ENCODE measurements at regions of chr17 and their contacts with region 1.

Region 1: GRCh38 chr17:46193626-46194392 is 580 bp upstream of the KANSL1 start:
- DNase-seq: peak; percentile 95 to 96
- H3K4me3 ChIP-seq: peak overlapping the region; percentile 91 to 99
- H3K27ac ChIP-seq: peak overlapping the region; percentile 100
- H3K4me1 ChIP-seq: peaks cover 4 to 11% of the 10 kb centered on the region in 2 donors
- H3K27me3 ChIP-seq: no peaks in the 10 kb centered on the region
- CTCF ChIP-seq: peak in 2 of 4 experiments; percentile 1 to 43
- POLR2A ChIP-seq: peak; percentile 43 to 64

Region 2: DNA sequence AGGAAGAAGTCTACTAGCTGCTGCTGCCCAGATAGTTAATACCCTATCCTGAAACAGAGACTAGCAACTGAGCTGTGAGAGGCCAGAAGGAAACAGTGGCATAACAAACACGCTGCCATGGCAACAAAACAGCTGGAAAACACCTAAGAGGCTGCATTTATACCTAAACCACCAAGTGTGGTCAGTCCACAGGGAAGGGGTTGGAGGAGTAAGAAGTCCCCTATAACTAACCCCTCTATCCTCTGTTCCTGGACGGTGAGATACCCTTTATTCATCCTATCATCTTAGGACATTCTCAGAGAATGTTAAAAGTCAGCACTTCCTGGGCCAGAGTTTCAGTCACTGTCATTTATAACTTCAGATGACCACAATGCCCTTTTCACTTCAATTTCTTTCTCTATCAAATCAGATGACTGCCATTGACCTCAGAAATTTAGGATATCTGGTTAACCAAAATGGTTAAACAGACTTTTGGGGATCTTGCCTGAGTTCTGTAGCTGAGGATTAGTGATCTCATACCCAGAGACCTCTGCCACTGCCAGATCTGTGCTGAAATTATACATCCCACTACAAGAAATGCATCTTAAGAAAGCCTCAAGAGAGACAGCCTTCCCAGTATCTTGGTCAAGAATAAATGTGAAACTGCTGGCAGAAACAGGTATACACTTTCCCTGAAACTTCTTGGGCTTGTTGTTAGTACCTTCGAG is 158.5 kb before region 1 on chr17:
- intact Hi-C with region 1: no loop called
- DNase-seq: no peak
- H3K4me3 ChIP-seq: no peak overlapping the region
- H3K27ac ChIP-seq: no peak overlapping the region
- H3K4me1 ChIP-seq: no peaks in the 10 kb centered on the region
- H3K27me3 ChIP-seq: no peaks in the 10 kb centered on the region
- CTCF ChIP-seq: no peak
- POLR2A ChIP-seq: no peak

Region 3: GRCh38 chr17:46046957-46047356 is 146.9 kb before region 1 on chr17:
- intact Hi-C with region 1: loop called (anchors 5 kb)
- DNase-seq: no peak
- H3K4me3 ChIP-seq: no peak overlapping the region
- H3K27ac ChIP-seq: peak overlapping the region; percentile 32 to 71
- H3K4me1 ChIP-seq: no peaks in the 10 kb centered on the region
- H3K27me3 ChIP-seq: no peaks in the 10 kb centered on the region
- CTCF ChIP-seq: peak; percentile 6 to 28 (median 10)
- POLR2A ChIP-seq: no peak

Region 4: GRCh38 chr17:46266656-46267544 is 73.1 kb after region 1 on chr17:
- intact Hi-C with region 1: no loop called
- DNase-seq: peak; percentile 72 to 80
- H3K4me3 ChIP-seq: peak overlapping the region; percentile 61 to 82
- H3K27ac ChIP-seq: peak overlapping the region; percentile 92 to 98
- H3K4me1 ChIP-seq: no peaks in the 10 kb centered on the region
- H3K27me3 ChIP-seq: no peaks in the 10 kb centered on the region
- CTCF ChIP-seq: peak in 1 of 4 experiments; percentile 4
- POLR2A ChIP-seq: peak in 1 of 2 donors; percentile 52

Measured in uterus (tissue), 4 donors.